Cardiac septum (tissue), 1 donor: ENCODE measurements at regions of chr21 and their contacts with region 1.

Region 1: DNA sequence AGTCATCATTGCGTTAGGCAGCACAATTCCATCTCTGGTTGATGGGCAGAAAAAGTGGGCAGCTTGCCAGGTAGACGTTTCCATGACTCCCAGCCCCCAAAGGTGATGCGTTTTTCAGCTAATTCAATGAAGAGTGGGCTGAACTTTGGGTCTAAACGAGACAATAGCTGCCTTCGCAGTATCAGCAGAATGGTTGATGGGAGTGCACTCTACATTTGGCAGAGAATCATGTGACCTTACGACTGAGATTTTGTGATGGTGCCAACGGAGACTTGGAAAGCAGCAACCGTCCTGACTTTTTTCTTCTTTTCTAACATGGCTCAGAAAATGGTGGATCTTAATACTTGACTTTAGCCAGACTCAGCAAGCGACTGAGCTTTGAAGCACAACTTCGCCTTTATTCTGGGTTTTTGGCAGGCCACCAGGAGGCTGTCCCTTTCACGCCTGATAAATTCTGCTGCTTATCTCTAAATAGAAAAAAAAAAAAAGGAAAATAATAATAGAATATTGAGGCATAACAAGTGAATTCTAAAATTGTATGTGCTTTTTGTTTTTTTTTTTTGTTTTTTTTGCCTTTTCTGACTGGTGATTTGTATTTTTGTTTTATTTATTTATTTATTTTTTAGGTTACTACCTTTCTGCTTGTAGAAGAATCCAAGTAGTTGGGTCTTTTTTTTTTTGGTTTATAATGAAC is 804.8 kb downstream of the USP25 start:
- DNase-seq: peak; percentile 80

Region 2: GRCh38 chr21:16117851-16118592 is 416.5 kb before region 1 on chr21:
- intact Hi-C with region 1: no loop called
- DNase-seq: no peak

Region 3: GRCh38 chr21:16194095-16194787 is 340.3 kb before region 1 on chr21:
- intact Hi-C with region 1: loop called (anchors 10 kb)
- DNase-seq: peak; percentile 82

Region 4: DNA sequence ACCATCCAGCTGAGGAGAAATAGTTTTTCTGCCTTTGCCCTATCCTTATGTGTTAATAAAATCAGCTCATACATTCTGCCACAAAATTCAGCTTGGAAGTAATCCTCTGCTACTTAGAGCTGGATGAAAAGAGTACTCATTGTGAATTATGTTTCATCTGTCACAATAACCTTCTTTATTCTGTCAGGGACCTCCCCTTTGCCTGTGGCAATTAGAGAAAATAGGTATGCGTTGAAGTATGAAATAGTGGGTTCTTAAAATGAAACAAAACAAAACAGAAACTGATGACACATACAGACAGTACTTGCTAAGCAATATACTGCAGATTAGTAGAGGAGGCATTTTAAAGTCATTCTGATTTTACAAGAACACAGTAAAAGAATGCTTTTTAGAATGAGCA is 226.3 kb before region 1 on chr21:
- intact Hi-C with region 1: loop called (anchors 10 kb)
- DNase-seq: no peak

Region 5: DNA sequence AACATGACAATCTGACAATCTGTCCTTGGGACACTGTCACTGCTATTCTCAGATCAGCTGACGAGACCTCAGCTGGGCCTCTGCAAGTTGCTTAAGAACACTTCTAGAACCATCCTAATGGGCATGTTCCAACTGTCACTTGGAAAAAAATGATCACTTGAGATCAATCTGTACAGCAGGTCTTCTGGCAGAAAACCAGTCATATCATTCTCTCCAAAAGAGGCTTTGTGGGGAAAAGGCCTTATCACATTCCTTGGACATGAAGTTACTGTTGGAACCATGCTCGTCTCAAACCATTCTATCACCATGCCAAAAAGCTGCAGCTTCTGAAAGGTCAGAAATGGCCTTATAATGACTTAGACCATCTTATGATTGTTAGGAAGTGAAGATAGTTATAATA is 60.6 kb before region 1 on chr21:
- intact Hi-C with region 1: loop called (anchors 5 kb)
- DNase-seq: no peak

Region 6: GRCh38 chr21:16588433-16588860 is 53.9 kb after region 1 on chr21:
- intact Hi-C with region 1: loop called (anchors 1 kb)
- DNase-seq: peak; percentile 85

Region 7: DNA sequence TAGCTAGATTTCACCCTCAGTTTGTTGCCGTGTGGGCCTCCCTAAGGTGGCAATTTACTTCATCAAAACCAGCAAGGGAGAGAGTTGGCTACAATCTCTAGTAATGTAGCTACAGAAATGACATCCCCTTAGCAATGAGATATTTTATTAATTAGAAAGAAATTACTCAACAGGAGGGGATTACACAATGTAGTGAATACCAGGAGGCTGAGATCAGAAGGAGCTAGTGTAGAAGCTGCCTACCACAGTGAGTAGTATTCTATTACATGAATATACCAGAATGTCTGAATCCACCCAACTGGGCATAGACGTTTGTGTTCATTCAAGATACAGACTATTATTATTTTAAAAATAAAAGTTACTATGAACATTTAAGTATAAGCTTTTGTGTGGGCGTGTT is 110.1 kb after region 1 on chr21:
- intact Hi-C with region 1: no loop called
- DNase-seq: no peak